Right ventricle myocardium inferior (tissue), 1 donor: ENCODE measurements at regions of chr19 and their contacts with region 1.

Region 1: DNA sequence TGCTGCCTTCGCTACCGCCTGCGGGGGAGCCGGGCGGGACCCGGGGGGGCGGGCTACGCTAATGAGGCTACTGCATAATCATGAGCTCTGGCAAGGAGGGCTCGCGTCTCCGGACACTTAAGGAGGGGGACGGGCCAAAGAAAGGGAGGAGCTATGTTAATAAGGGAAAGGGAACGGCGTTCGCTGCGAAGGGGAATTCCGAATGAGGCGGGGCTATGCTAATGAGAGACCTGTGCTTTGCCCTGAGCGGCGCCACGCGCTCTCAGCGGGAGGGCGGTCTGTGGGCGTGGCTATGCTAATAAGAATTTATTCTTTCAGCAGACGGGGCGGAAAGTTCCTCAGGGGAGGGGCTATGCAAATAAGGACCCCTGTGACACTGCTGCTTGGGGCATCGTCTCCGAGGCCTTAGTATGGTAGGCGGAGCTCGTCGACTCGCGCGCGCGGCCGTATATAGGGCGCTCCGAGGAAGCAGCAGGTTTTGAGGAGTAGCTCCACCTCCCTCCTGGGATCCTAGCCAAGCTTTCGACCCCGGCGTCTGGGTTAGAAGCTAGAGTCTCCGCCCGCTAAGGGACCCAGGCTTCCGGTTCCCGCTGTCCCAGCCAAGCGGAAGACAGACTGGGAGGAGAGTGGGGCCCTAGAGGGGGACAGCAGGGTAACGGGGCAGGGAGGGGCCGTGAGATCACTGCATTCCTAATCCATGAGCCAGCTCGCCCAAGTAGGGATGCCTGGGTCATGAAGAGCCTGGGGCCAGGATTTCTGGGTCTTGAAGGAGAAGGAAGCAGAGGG is at the start of gene RRAS:
- DNase-seq: peak; percentile 100
- ATAC-seq: peak; percentile 79
- total RNA-seq, gene RRAS: 120 TPM

Region 2: GRCh38 chr19:49590071-49590970 is 50.0 kb before region 1 on chr19:
- intact Hi-C with region 1: loop called (anchors 2 kb)
- DNase-seq: peak; percentile 98
- ATAC-seq: peak; percentile 89